Activated CD8-positive, alpha-beta T cell treated with anti-CD3 and anti-CD28 coated beads, Interleukin-2, amount 10 ng/mL, durations not matched to agents 7 days and 5 days (primary cell): ENCODE measurements at regions of chr1 and their contacts with region 1.

Region 1: DNA sequence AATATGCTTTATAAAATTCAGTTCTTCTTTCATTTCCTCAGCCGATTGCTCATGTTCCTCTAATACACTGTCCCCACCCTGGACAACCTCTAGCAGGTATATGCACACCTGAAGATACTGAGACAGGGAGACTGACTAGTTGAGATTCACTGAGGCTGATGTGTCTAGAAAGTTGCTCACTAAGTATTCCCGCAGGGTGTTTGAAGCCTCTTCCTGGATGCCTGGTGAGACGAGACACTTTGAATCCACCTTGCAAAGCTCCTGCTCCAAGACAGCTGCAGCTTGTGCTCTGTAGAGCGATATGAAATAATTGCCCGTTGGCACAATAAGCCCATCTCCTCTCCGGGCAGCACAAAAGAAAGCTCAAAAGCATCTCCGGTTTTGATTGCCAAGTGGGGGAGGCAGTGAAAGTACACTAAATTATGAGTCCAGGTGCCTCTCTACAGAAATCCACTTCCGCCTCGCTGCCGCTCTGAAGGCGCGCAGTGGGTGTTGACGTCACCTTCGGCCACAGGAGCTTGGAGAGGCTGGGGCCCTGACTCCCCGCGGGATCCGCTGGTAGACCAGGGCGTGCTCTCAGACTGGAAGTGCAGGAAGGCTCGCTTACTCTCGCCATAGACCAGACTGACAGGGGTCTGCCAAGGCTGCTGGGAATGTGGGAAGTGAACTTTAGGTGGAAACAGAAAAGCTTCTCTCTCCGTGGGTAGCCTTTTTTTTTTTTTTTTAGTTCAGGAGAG is 46.3 kb downstream of the GPA33 start:
- DNase-seq: peak; percentile 88
- ATAC-seq: peak; percentile 100
- H3K4me3 Mint-ChIP-seq: peak overlapping the region; percentile 78
- H3K27ac Mint-ChIP-seq: peak overlapping the region; percentile 83
- H3K4me1 Mint-ChIP-seq: peaks cover 18% of the 10 kb centered on the region
- H3K27me3 Mint-ChIP-seq: peaks cover 18% of the 10 kb centered on the region

Region 2: DNA sequence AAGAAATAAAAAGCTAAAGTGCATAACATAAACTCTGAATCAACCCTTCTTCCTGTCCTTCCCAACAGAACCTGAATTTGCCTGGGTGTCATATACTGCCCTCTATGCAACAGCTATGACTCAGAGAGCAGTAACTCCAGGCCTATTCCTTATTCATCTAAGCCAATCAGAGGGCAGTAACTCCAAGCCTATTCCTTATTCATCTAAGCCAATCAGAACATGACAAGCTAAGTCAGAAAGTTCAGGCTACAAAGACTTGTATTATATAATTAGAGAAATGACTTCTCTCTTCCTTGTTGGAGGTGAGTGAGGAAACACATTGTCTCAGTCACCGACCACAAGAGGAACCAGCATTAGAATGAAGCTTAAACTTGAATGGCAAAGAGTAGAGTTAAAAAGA is 141.6 kb before region 1 on chr1:
- CTCF ChIA-PET with region 1: interaction called, 10 read pairs
- POLR2A ChIA-PET with region 1: no interaction called
- DNase-seq: no peak
- ATAC-seq: no peak
- H3K4me3 Mint-ChIP-seq: no peak overlapping the region
- H3K27ac Mint-ChIP-seq: no peak overlapping the region
- H3K4me1 Mint-ChIP-seq: peaks cover 48% of the 10 kb centered on the region
- H3K27me3 Mint-ChIP-seq: peaks cover 28% of the 10 kb centered on the region

Region 3: DNA sequence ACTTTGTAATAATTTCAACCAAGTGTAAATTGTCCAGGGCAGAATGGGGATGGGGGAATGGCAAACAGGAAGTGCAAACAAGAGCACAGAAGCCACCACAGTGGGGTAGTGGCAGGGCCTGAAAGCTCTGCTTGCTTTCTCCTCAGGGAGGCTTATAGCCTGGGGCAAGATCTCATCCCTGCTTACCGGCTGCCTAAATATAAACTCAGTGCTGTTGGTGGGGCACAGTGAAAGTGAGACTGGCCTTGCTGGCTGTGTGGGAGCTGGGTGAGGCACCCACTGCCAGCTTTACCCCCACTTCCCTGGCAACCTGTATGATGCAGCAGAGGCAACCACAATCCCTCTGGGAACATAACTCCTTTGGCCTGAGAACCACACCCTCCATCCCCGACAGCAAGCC is 65.2 kb after region 1 on chr1:
- CTCF ChIA-PET with region 1: no interaction called
- POLR2A ChIA-PET with region 1: no interaction called
- DNase-seq: no peak
- ATAC-seq: peak; percentile 53
- H3K4me3 Mint-ChIP-seq: no peak overlapping the region
- H3K27ac Mint-ChIP-seq: peak overlapping the region; percentile 62
- H3K4me1 Mint-ChIP-seq: peaks cover 48% of the 10 kb centered on the region
- H3K27me3 Mint-ChIP-seq: peaks cover 20% of the 10 kb centered on the region